CD4-positive, alpha-beta memory T cell (primary cell): ENCODE measurements at regions of chr11 and their contacts with region 1.

Region 1: GRCh38 chr11:27497284-27497866 is 9.2 kb downstream of the LIN7C start:
- DNase-seq: peak in 3 of 5 donors; percentile 12 to 22 (median 16)
- H3K4me3 ChIP-seq: no peak overlapping the region
- H3K4me3 Mint-ChIP-seq: no peak overlapping the region
- H3K27ac ChIP-seq: no peak overlapping the region
- H3K27ac Mint-ChIP-seq: peak overlapping the region in 2 of 7 donors; percentile 42 to 48
- H3K4me1 ChIP-seq: peaks cover 22% of the 10 kb centered on the region
- H3K4me1 Mint-ChIP-seq: peaks cover 10 to 27% (median 13%) of the 10 kb centered on the region in 4 donors
- H3K27me3 ChIP-seq: no peaks in the 10 kb centered on the region
- H3K27me3 Mint-ChIP-seq: no peaks in the 10 kb centered on the region

Region 2: DNA sequence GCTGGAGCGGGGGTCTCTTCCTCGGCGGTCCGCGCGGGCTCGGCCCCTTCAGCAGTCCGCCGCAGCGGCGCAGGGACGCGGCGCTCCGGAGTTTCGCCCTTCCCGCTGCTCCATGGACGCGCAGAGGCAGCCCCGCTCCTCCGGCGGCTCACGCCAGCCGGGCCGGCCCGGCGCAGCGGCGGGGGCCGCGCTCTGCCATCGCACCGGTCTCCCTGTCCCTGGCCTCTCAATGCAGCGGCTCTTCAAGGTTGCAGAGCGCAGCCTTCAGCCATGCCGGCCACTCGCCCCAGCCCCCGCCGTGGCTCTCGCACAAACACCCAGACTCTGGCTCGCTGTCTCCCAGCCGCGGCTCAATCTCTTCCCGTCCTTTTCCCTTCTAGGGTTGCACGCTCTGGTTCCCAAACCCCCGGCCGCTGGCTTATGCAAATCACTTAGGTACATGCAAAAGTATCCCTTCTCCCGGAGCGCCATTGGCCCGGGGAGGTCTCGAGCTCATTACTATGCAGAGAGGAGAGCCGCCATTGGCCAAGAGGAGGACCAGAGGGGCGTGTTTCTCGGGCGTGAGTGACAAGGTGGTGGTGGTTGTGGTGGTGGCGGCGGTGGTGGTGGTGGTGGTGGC is 24.9 kb before region 1 on chr11 and contains the start of gene LGR4:
- CTCF ChIA-PET with region 1: interaction called, 10 read pairs
- POLR2A ChIA-PET with region 1: no interaction called
- intact Hi-C with region 1: no loop called
- DNase-seq: peak; percentile 68 to 81 (median 70)
- H3K4me3 ChIP-seq: peak within 1 kb of the TSS; percentile 27 to 65
- H3K4me3 Mint-ChIP-seq: peak within 1 kb of the TSS; percentile 94 to 99 (median 95)
- H3K27ac ChIP-seq: no peak within 1 kb of the TSS
- H3K27ac Mint-ChIP-seq: peak within 1 kb of the TSS; percentile 1 to 93 (median 81)
- H3K4me1 ChIP-seq: peaks cover 13% of the 10 kb centered on the region
- H3K4me1 Mint-ChIP-seq: peaks cover 11 to 27% (median 18%) of the 10 kb centered on the region in 4 donors
- H3K27me3 ChIP-seq: no peaks in the 10 kb centered on the region
- H3K27me3 Mint-ChIP-seq: peaks cover 3 to 12% of the 10 kb centered on the region in 2 donors
- total RNA-seq, gene LGR4: 0.58 to 1.6 TPM